ENCODE measurements at regions of chr6 and their contacts with region 1.

Region 1: DNA sequence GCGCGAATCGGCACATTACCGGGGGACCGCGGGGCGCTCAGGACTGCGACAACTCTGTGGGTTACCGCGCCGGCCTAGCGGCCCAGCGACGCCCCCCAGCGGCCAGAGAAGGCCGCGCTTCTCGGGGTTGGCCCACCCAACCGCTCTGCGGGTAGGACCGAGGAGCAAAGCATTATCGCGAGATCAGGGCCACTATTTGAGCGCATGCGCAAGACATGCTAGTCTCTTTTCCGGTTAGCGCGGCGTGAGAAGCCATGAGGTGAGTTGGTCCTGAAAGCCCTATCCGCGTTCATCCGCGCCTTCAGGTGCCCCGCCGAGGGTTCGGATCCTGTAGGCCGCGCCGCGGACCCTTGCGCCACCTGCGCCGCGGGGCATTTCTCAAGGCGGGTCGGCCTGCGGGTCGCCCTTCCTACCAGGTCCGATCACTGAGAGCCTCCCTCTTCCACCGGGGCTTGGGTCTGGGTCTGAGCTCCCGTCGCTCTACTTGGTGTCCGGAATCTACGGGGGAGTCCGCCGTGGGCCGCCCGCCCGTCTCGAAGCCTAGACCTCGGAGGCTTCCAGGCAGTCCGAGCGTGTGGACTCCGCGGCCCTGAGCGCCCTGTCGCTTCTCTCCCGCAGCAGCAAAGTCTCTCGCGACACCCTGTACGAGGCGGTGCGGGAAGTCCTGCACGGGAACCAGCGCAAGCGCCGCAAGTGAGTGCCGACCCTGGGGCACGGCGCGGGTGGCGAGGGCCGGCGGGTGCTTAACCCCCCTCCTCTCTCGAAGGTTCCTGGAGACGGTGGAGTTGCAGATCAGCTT is at the start of gene RPL10A:
- DNase-seq: peak; percentile 98
- ATAC-seq: peak; percentile 91
- H3K4me3 ChIP-seq: peak within 1 kb of the TSS; percentile 51 to 95 (median 87)
- H3K4me3 Mint-ChIP-seq: peak within 1 kb of the TSS; percentile 99
- H3K27ac ChIP-seq: peak within 1 kb of the TSS; percentile 91 to 92
- H3K27ac Mint-ChIP-seq: peak within 1 kb of the TSS; percentile 99
- H3K4me1 ChIP-seq: peaks cover 19 to 34% of the 10 kb centered on the region in 2 donors
- H3K4me1 Mint-ChIP-seq: peaks cover 42% of the 10 kb centered on the region
- H3K27me3 ChIP-seq: no peaks in the 10 kb centered on the region
- H3K27me3 Mint-ChIP-seq: no peaks in the 10 kb centered on the region
- CTCF ChIP-seq: peak; percentile 91
- total RNA-seq, gene RPL10A: 1,621 and 1,687 TPM in 2 replicates

Region 2: DNA sequence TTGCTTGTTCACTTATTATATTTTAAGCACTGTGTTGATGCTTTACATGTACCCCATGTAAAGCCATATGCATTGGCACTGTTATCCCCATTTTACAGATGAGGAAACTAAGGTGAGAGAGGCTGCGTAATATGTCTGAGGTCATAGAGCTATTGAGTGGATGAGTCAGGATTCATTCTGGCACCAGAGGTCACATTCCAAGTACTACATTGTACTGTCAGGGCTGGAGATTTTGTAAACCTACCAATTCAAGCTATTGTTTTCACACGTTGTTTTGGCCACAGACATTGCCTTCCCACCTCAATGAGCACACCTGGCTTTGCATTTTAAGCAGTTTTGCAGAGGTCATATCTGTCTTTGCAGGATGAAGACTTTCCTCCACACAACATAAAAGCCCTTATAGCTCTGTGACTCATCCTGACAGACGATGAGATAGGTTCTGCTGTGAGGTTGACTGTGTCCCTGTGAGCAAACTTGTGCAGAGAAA is 546.2 kb before region 1 on chr6:
- CTCF ChIA-PET with region 1: no interaction called
- POLR2A ChIA-PET with region 1: no interaction called
- intact Hi-C with region 1: no loop called
- DNase-seq: no peak
- ATAC-seq: no peak
- H3K4me3 ChIP-seq: no peak overlapping the region
- H3K4me3 Mint-ChIP-seq: no peak overlapping the region
- H3K27ac ChIP-seq: no peak overlapping the region
- H3K27ac Mint-ChIP-seq: no peak overlapping the region
- H3K4me1 ChIP-seq: no peaks in the 10 kb centered on the region
- H3K4me1 Mint-ChIP-seq: no peaks in the 10 kb centered on the region
- H3K27me3 ChIP-seq: no peaks in the 10 kb centered on the region
- H3K27me3 Mint-ChIP-seq: no peaks in the 10 kb centered on the region
- CTCF ChIP-seq: no peak

Region 3: DNA sequence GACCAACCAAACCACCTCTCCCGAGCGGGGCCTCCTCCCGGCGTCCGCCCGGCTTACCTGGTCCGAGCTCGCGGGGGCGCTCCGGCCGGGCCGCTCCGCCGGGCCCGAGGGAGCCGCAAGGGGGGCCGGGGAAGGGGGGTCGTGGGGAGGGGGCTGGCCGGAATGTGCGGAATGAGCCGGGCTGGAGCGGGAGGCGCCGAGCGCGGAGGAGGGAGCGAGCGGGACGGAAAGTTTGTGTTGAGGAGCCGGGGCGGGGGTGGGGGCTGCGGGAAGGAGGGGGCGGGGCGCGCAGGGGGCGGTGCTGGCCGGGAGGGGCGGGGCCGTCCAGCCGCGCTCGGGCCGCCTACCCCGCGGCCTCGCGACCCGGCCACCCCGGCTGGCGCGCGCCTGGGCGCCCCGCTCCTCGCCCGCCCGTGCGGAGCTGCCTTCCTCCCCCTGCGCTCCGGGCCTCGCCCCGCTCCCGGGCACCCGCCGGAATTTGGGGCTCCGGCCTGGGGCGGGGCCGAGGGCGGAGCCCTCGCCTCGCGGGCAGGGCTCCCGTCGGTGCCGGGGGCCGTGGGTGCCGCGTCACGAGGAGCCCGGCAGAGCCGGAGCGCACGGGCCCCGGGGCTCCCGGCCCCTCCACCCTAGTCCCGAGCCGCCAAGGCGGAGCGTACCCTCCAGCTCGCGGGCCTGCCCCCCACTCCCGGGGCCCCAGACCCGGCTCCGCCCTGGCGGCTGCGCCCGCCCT is 28.6 kb after region 1 on chr6 and contains the start of gene TEAD3:
- CTCF ChIA-PET with region 1: no interaction called
- POLR2A ChIA-PET with region 1: interaction called, 5 read pairs
- intact Hi-C with region 1: loop called (anchors 1 kb)
- DNase-seq: peak; percentile 79
- ATAC-seq: peak; percentile 73
- H3K4me3 ChIP-seq: peak within 1 kb of the TSS; percentile 39 to 78 (median 63)
- H3K4me3 Mint-ChIP-seq: peak within 1 kb of the TSS; percentile 83
- H3K27ac ChIP-seq: no peak within 1 kb of the TSS
- H3K27ac Mint-ChIP-seq: peak within 1 kb of the TSS; percentile 46
- H3K4me1 ChIP-seq: peaks cover 14 to 22% of the 10 kb centered on the region in 2 donors
- H3K4me1 Mint-ChIP-seq: peaks cover 21% of the 10 kb centered on the region
- H3K27me3 ChIP-seq: peaks cover 0 to 40% (median 17%) of the 10 kb centered on the region in 4 experiments
- H3K27me3 Mint-ChIP-seq: peaks cover 36% of the 10 kb centered on the region
- CTCF ChIP-seq: no peak
- total RNA-seq, gene TEAD3: 0.17 TPM in 2 replicates